CD4-positive, alpha-beta T cell (primary cell): ENCODE measurements at regions of chr7 and their contacts with region 1.

Region 1: DNA sequence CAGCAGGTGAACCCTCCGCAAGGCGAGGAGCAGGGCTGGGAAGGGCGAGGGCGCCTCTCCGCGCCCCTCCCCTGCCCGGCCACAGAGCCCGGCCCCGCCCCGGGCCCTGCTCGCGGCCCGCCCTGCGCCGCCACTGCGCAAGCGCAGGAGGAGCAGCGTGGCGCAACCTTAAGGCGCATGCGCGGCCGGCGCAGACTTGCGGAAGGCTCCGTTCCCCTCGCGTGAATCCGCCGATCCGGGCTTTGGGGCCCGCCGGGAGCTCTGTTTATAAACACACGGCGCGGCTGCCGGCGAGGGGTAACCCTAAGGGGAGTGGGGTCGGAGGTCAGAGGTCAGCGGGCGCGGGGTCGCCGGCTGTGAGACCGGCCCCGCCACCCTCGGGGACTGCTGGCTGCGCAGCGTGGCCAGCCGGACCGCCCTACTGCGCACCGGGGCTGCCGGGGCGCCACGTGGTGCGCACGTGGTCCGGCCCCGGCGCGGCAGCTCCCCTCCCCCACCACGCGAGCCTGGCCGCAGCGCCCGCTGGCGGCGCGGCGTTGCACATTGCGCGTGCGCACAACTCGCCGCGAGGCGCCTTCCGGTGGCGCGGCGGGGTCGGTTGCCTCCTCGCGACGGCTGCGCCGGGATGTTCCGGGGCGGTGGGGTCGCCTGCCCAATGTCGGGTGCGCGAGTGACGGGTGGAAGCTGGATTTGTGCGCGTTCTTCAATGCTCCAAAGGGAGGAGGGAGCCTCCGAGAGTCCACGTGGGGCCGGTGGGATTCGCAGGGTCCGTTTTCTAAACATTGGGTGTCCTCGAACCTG is 40.2 kb upstream of the FOXK1 start:
- DNase-seq: peak; percentile 94 to 99 (median 96)
- ATAC-seq: peak; percentile 87
- H3K4me3 ChIP-seq: peak overlapping the region; percentile 74
- H3K4me3 Mint-ChIP-seq: peak overlapping the region; percentile 91
- H3K27ac ChIP-seq: peak overlapping the region; percentile 86 to 89
- H3K27ac Mint-ChIP-seq: peak overlapping the region; percentile 97
- H3K4me1 ChIP-seq: peaks cover 25% of the 10 kb centered on the region
- H3K4me1 Mint-ChIP-seq: peaks cover 16% of the 10 kb centered on the region
- H3K27me3 ChIP-seq: no peaks in the 10 kb centered on the region
- H3K27me3 Mint-ChIP-seq: no peaks in the 10 kb centered on the region
- CTCF ChIP-seq: peak; percentile 20

Region 2: DNA sequence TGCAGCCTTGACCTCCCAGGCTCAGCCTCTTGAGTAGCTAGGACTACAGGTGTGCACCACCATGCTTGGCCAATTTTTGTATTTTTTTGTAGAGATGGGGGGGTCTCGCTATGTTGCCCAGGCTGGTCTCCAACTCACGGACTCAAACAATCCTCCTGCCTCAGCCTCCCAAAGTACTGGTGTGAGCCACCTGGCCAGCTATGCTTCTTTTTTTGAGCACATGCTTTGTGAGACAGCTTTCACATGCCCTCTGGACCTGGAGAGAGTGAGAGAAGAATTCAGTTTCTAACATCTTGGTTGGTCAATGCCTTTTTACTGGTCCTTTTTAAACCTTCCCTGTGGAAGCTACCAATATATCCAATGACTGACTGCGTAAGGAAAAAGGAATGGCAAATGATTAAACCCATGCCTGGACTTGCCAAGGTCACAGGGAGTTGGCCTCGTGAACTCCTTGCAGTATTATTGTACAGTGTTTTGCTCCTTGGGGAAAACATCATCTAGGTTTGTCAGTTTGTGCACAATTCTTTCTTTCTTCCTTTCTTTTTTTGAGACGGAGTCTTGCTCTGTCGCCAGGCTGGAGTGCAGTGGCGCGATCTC is 34.0 kb after region 1 on chr7:
- CTCF ChIA-PET with region 1: interaction called, 3 read pairs
- POLR2A ChIA-PET with region 1: interaction called, 141 read pairs
- intact Hi-C with region 1: no loop called
- DNase-seq: no peak
- ATAC-seq: no peak
- H3K4me3 ChIP-seq: no peak overlapping the region
- H3K4me3 Mint-ChIP-seq: no peak overlapping the region
- H3K27ac ChIP-seq: no peak overlapping the region
- H3K27ac Mint-ChIP-seq: no peak overlapping the region
- H3K4me1 ChIP-seq: no peaks in the 10 kb centered on the region
- H3K4me1 Mint-ChIP-seq: no peaks in the 10 kb centered on the region
- H3K27me3 ChIP-seq: no peaks in the 10 kb centered on the region
- H3K27me3 Mint-ChIP-seq: no peaks in the 10 kb centered on the region
- CTCF ChIP-seq: no peak

Region 3: GRCh38 chr7:4689668-4690067 is 47.8 kb after region 1 on chr7:
- CTCF ChIA-PET with region 1: interaction called, 5 read pairs
- POLR2A ChIA-PET with region 1: interaction called, 141 read pairs
- intact Hi-C with region 1: loop called in 1 of 2 experiments (anchors 1 kb)
- DNase-seq: no peak
- ATAC-seq: no peak
- H3K4me3 ChIP-seq: no peak overlapping the region
- H3K4me3 Mint-ChIP-seq: no peak overlapping the region
- H3K27ac ChIP-seq: no peak overlapping the region
- H3K27ac Mint-ChIP-seq: peak overlapping the region; percentile 19
- H3K4me1 ChIP-seq: peaks cover 63% of the 10 kb centered on the region
- H3K4me1 Mint-ChIP-seq: peaks cover 76% of the 10 kb centered on the region
- H3K27me3 ChIP-seq: no peaks in the 10 kb centered on the region
- H3K27me3 Mint-ChIP-seq: no peaks in the 10 kb centered on the region
- CTCF ChIP-seq: no peak

Region 4: DNA sequence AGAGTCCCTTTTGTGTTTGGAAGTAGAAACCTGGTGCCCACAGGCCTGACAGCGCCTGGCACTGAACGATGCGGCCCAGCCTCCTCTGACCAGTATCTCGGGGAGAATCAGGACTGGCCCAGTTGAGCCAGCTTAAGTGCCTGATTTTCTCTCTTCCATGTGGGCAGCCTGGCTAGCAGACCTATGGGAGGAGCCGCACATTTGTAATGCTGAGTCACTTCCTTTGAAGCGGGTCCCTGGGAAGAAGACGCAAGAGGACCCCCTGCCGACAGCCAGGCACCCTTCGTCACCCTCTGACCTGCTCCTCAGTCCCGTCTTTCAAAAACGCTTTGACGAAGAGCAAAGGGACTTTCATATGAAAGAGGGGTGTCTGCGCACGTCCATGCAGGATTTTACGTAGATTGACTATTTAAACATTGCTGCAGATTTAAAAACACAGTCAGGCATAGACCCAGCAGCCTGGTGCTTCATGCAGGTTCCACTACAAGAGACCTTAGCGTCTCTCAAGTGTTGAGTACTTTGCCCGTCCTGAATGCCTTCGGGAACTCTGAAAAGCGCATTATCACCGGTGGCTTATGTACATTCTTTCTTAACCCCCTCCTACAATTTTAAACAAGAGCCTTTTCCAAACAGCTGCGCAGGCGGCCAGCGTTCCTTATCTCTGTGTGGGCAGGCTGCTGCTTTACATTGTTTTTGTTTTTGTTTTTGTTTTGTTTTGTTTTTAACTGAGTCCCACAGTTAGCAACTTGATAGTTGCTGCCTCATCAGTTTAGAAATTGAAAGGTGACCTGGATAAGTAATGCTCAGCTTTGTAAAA is 97.1 kb after region 1 on chr7:
- CTCF ChIA-PET with region 1: interaction called, 5 read pairs
- POLR2A ChIA-PET with region 1: interaction called, 41 read pairs
- intact Hi-C with region 1: loop called (anchors 1 to 2 kb)
- DNase-seq: peak in 5 of 14 experiments; percentile 33 to 69 (median 48)
- ATAC-seq: peak; percentile 25
- H3K4me3 ChIP-seq: peak overlapping the region; percentile 35
- H3K4me3 Mint-ChIP-seq: peak overlapping the region; percentile 87
- H3K27ac ChIP-seq: peak overlapping the region; percentile 41 to 62
- H3K27ac Mint-ChIP-seq: peak overlapping the region; percentile 94
- H3K4me1 ChIP-seq: peaks cover 45% of the 10 kb centered on the region
- H3K4me1 Mint-ChIP-seq: peaks cover 75% of the 10 kb centered on the region
- H3K27me3 ChIP-seq: no peaks in the 10 kb centered on the region
- H3K27me3 Mint-ChIP-seq: no peaks in the 10 kb centered on the region
- CTCF ChIP-seq: no peak

Region 5: GRCh38 chr7:4764402-4765007 is 122.6 kb after region 1 on chr7:
- CTCF ChIA-PET with region 1: no interaction called
- POLR2A ChIA-PET with region 1: no interaction called
- intact Hi-C with region 1: no loop called
- DNase-seq: no peak
- ATAC-seq: no peak
- H3K4me3 ChIP-seq: no peak overlapping the region
- H3K4me3 Mint-ChIP-seq: no peak overlapping the region
- H3K27ac ChIP-seq: no peak overlapping the region
- H3K27ac Mint-ChIP-seq: no peak overlapping the region
- H3K4me1 ChIP-seq: no peaks in the 10 kb centered on the region
- H3K4me1 Mint-ChIP-seq: no peaks in the 10 kb centered on the region
- H3K27me3 ChIP-seq: no peaks in the 10 kb centered on the region
- H3K27me3 Mint-ChIP-seq: no peaks in the 10 kb centered on the region
- CTCF ChIP-seq: no peak

Region 6: DNA sequence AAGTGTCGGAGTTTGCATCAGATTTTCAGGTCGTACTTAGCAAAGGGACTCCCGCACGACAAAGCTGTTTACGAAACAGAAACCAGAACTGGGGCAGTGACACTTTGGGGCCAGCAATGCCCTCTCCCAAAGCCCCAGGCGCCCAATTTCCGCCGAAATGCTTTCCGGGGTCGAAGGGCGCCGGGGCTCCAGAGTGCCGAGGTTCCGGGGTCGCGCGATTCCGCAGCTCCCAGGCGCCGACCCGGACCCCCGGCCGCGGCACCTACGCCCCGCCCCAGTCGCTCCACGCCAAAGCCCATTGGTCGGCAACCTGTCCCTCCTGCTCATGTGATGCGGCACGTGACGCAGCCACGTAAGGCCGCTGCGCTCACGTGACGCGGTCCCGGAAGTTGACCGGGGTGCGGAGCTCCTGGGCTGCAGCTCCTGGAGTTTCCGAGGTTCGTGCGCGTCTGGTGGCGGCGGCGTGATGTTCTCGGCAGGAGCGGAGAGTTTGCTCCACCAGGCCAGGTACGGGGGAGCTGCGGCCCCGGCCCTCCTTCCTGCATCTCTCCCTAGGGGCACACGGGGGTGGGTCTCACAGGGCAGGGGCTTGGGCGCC is 133.5 kb after region 1 on chr7 and contains the start of gene AP5Z1:
- CTCF ChIA-PET with region 1: interaction called, 15 read pairs
- POLR2A ChIA-PET with region 1: interaction called, 67 read pairs
- intact Hi-C with region 1: loop called in 1 of 2 experiments (anchors 1 kb)
- DNase-seq: peak; percentile 86 to 99 (median 93)
- ATAC-seq: peak; percentile 87
- H3K4me3 ChIP-seq: peak within 1 kb of the TSS; percentile 99
- H3K4me3 Mint-ChIP-seq: peak within 1 kb of the TSS; percentile 100
- H3K27ac ChIP-seq: peak within 1 kb of the TSS; percentile 96
- H3K27ac Mint-ChIP-seq: peak within 1 kb of the TSS; percentile 100
- H3K4me1 ChIP-seq: peaks cover 41% of the 10 kb centered on the region
- H3K4me1 Mint-ChIP-seq: peaks cover 49% of the 10 kb centered on the region
- H3K27me3 ChIP-seq: no peaks in the 10 kb centered on the region
- H3K27me3 Mint-ChIP-seq: no peaks in the 10 kb centered on the region
- CTCF ChIP-seq: no peak
- total RNA-seq, gene AP5Z1: 93.5 to 102 TPM